ENCODE measurements at regions of chrX and their contacts with region 1.

Region 1: GRCh38 chrX:13087322-13088155 is 43.1 kb upstream of the FAM9C start:
- DNase-seq: peak; percentile 64
- H3K4me3 Mint-ChIP-seq: peak overlapping the region; percentile 79
- H3K27ac Mint-ChIP-seq: peak overlapping the region; percentile 100
- H3K4me1 Mint-ChIP-seq: peaks cover 94% of the 10 kb centered on the region
- H3K27me3 Mint-ChIP-seq: no peaks in the 10 kb centered on the region

Region 2: DNA sequence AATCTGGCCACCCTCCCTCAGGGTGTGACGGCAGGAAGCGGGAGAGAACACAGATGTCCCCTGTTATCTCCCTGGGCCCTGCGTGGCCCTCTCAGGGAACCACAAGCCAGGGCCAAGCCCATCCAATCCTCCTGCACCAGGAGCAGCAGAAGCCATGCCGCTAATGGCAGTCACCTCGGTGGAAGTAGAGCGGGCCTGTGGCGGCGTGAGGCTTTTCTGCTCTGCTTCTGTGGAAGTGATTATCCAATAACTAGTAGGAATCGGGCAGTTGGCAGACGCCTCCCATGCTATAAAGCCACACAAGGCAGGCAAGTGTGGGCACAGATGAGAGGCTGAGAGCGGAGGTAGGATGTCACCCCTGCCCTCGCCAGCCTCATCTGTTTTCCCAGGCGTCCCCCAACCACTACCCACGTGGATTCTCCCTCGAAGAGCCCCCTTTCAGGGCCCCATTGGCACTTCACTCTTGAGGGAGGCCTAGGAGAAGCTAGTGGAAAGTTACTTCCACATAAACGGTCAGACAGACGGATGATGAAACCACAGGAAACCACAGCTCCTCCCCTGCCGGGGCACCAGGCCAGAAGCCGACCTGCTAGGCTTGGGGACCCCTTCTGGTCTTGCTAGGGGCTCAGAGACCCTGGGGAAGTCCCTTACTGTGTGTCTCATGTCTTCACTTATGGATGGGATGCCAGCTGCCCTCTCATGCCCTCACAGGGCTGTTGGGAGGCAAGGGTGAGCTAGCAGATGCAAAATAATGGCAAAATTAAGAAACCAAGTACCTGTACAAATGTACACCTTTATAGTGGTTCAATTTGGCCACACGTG is 131.4 kb before region 1 on chrX:
- intact Hi-C with region 1: loop called (anchors 1 kb)
- DNase-seq: peak; percentile 60
- H3K4me3 Mint-ChIP-seq: peak overlapping the region; percentile 86
- H3K27ac Mint-ChIP-seq: peak overlapping the region; percentile 99
- H3K4me1 Mint-ChIP-seq: peaks cover 79% of the 10 kb centered on the region
- H3K27me3 Mint-ChIP-seq: no peaks in the 10 kb centered on the region

Region 3: GRCh38 chrX:12999422-12999821 is 88.1 kb before region 1 on chrX:
- intact Hi-C with region 1: loop called (anchors 1 kb)
- DNase-seq: peak; percentile 51
- H3K4me3 Mint-ChIP-seq: peak overlapping the region; percentile 63
- H3K27ac Mint-ChIP-seq: peak overlapping the region; percentile 98
- H3K4me1 Mint-ChIP-seq: peaks cover 59% of the 10 kb centered on the region
- H3K27me3 Mint-ChIP-seq: no peaks in the 10 kb centered on the region

Region 4: GRCh38 chrX:13167481-13168231 is 80.1 kb after region 1 on chrX:
- intact Hi-C with region 1: loop called (anchors 1 kb)
- DNase-seq: no peak
- H3K4me3 Mint-ChIP-seq: peak overlapping the region; percentile 53
- H3K27ac Mint-ChIP-seq: peak overlapping the region; percentile 91
- H3K4me1 Mint-ChIP-seq: peaks cover 29% of the 10 kb centered on the region
- H3K27me3 Mint-ChIP-seq: no peaks in the 10 kb centered on the region

Region 5: DNA sequence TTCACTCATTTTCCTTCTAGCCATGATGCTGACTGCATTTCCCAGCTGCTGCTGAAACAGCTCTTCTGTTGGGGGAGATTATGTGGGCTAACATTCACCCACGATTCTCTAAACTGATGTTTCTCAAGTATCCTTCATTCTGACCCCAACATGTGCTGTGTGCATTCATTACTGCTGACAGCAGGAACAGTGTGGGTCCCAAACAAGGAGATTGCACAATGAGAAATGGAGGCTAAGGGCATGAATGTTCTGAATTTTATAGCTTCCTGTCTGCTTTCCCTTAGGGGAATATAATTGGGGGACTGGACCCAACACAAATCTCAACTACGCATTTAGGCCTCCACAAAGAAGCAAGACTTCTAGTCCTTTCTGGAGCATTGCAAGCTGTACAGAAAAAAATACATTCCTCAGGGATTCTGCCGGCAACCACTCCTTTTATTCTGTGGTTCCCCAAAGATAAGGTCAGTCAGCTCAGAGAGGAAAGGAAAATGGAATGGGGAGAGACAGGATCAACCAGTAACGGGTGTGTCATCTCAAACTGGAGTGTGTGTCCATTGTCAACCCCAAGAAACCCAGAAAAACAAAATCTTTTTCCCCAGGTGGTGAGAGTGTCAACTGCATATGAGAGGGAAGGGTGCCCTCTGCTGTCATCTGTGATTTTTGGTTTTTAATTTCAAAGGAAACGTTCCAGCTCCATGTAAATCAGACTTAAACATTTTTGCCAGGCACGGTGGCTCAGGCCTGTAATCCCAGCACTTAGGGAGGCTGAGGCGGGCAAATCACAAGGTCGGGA is 400.4 kb after region 1 on chrX:
- intact Hi-C with region 1: loop called (anchors 1 kb)
- DNase-seq: peak; percentile 27
- H3K4me3 Mint-ChIP-seq: peak overlapping the region; percentile 7
- H3K27ac Mint-ChIP-seq: peak overlapping the region; percentile 61
- H3K4me1 Mint-ChIP-seq: peaks cover 26% of the 10 kb centered on the region
- H3K27me3 Mint-ChIP-seq: no peaks in the 10 kb centered on the region

Measured in activated T-helper 1 cell treated with anti-CD3 and anti-CD28 coated beads, Interleukin-12 subunit alpha, Interleukin-12 subunit beta, Interleukin-2, Interleukin-4 antibody, amounts not matched to agents 30 ng/mL and 10 ng/mL and 1 ng/mL, durations not matched to agents 14 hours and 24 hours and 36 hours (primary cell).